H1 (cell line): ENCODE measurements at regions of chr4 and their contacts with region 1.

Region 1: GRCh38 chr4:154743683-154744340 is at the start of gene LRAT:
- DNase-seq: peak; percentile 80 to 91
- H3K4me3 ChIP-seq: peak within 1 kb of the TSS; percentile 70 to 89 (median 82)
- H3K27ac ChIP-seq: peak within 1 kb of the TSS; percentile 26; the same call in 1 of the 2 replicates
- H3K4me1 ChIP-seq: peaks cover 9 to 24% (median 19%) of the 10 kb centered on the region in 4 experiments
- H3K27me3 ChIP-seq: peaks cover 0 to 33% (median 26%) of the 10 kb centered on the region in 4 experiments; a peak in 6 of 7 replicates
- CTCF ChIP-seq: peak; percentile 42 to 69 (median 54)
- EP300 ChIP-seq: no peak
- POLR2A ChIP-seq: peak; percentile 67 to 91
- RAD21 ChIP-seq: peak; percentile 0 to 22; a peak in 2 of 4 replicates
- total RNA-seq, gene LRAT: 10.3 and 10.6 TPM in 2 replicates

Region 2: GRCh38 chr4:154720123-154720522 is 23.7 kb before region 1 on chr4:
- CTCF ChIA-PET with region 1: interaction called, 14 read pairs
- POLR2A ChIA-PET with region 1: interaction called, 17 read pairs
- DNase-seq: no peak
- H3K4me3 ChIP-seq: no peak overlapping the region
- H3K27ac ChIP-seq: no peak overlapping the region
- H3K4me1 ChIP-seq: peaks cover 0 to 6% (median 4%) of the 10 kb centered on the region in 4 experiments; a peak in 3 of 7 replicates
- H3K27me3 ChIP-seq: no peaks in the 10 kb centered on the region
- CTCF ChIP-seq: no peak
- EP300 ChIP-seq: no peak
- POLR2A ChIP-seq: no peak
- RAD21 ChIP-seq: no peak

Region 3: GRCh38 chr4:154757713-154758112 is 13.9 kb after region 1 on chr4:
- CTCF ChIA-PET with region 1: interaction called, 4 read pairs
- POLR2A ChIA-PET with region 1: interaction called, 80 read pairs
- DNase-seq: no peak
- H3K4me3 ChIP-seq: no peak overlapping the region
- H3K27ac ChIP-seq: no peak overlapping the region
- H3K4me1 ChIP-seq: no peaks in the 10 kb centered on the region
- H3K27me3 ChIP-seq: no peaks in the 10 kb centered on the region
- CTCF ChIP-seq: no peak
- EP300 ChIP-seq: no peak
- POLR2A ChIP-seq: no peak
- RAD21 ChIP-seq: no peak

Region 4: GRCh38 chr4:154982187-154983047 is 238.6 kb after region 1 on chr4:
- CTCF ChIA-PET with region 1: no interaction called
- POLR2A ChIA-PET with region 1: no interaction called
- DNase-seq: peak; percentile 38 to 76
- H3K4me3 ChIP-seq: no peak overlapping the region
- H3K27ac ChIP-seq: no peak overlapping the region
- H3K4me1 ChIP-seq: no peaks in the 10 kb centered on the region
- H3K27me3 ChIP-seq: no peaks in the 10 kb centered on the region
- CTCF ChIP-seq: peak; percentile 74 to 90 (median 85)
- EP300 ChIP-seq: no peak
- POLR2A ChIP-seq: no peak
- RAD21 ChIP-seq: peak; percentile 80 to 87